Activated CD4-positive, alpha-beta T cell treated with anti-CD3 and anti-CD28 coated beads for 36 hours (primary cell): ENCODE measurements at regions of chr14 and their contacts with region 1.

Region 1: DNA sequence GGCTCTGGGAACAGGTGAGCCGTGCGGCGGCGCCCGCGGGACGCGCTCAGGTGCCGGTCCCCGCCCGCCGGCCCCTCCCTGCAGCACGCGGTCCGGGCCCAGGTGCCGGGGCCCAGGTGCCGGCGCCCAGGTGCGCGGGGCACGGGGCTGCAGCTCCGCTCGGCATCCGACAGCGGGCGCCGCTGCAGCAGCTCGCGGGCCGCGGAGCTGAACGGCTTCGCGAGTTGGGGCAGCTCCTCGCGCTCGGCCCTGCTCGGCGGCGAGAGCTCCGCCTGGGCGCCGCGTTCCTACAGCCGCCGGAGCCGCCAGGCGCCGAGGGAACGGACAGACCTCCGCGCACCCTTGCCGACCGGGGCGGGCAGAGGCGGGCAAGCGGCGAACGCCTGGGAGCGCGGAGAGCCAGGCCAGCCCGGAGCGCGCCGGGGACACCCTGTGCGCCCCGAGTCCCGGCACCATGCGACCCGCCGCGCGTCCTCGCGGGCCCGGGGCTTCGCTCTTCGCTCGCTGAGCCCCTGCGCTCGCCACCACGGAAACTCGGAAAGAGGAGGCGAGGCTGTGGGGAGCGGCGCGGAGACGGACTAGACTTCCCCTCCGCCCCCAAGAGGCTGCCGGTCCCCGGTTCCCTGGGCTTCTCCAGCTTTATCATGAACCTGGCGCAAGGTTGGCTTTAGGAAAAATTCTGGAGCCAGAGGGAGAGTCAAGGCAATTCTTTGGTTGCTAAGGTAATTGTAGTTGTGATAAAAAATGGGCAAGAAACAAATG is at the start of gene RGS6:
- DNase-seq: peak; percentile 63
- ATAC-seq: peak; percentile 82
- H3K4me3 Mint-ChIP-seq: peak within 1 kb of the TSS; percentile 44
- H3K27ac Mint-ChIP-seq: no peak within 1 kb of the TSS
- H3K4me1 Mint-ChIP-seq: peaks cover 17% of the 10 kb centered on the region
- H3K27me3 Mint-ChIP-seq: peaks cover 51% of the 10 kb centered on the region
- total RNA-seq, gene RGS6: 0.39 to 0.57 TPM

Region 2: GRCh38 chr14:71967704-71968103 is 35.3 kb after region 1 on chr14:
- CTCF ChIA-PET with region 1: interaction called, 3 read pairs
- POLR2A ChIA-PET with region 1: no interaction called
- intact Hi-C with region 1: loop called in 1 of 2 experiments (anchors 2 kb)
- DNase-seq: no peak
- ATAC-seq: peak; percentile 89
- H3K4me3 Mint-ChIP-seq: peak overlapping the region; percentile 38
- H3K27ac Mint-ChIP-seq: peak overlapping the region; percentile 78
- H3K4me1 Mint-ChIP-seq: peaks cover 14% of the 10 kb centered on the region
- H3K27me3 Mint-ChIP-seq: peaks cover 29% of the 10 kb centered on the region

Region 3: DNA sequence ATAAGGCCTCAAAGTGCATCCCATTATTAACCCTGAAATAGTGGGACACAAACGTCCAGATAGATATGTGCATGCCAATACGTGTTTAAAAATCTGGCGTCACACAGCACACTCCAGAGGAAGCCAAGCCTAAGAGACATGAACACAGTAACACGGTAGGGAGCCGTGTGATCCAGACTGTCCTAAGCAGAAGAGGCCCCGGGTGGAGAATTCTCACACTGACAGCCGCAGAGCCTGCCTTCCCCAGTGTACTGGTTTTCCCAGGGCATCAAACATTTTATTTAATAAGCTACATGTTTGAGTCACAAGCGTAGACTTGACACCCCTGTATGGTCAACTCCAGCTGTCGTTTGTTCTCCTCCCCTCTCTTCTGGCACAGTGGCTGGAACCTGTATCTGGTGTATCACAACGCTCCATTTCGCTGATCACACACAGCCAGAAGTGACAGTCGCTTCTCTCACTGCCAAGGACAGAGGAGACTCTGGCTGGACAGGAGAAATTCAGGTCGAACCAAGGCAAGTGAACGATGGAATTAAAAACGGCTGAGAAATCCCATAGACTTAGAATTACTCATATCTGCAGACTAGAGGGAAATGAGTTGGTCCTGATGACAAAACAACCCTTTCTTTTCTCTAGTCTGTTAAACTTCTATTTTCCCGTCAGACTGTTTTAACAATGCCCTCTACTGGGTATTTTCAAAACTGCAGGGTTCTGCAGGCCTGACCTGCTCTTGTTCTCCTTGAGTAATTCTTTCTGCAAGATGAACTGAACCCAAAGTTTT is 359.7 kb after region 1 on chr14:
- CTCF ChIA-PET with region 1: no interaction called
- POLR2A ChIA-PET with region 1: no interaction called
- intact Hi-C with region 1: loop called in 1 of 2 experiments (anchors 10 kb)
- DNase-seq: peak; percentile 18
- ATAC-seq: peak; percentile 51
- H3K4me3 Mint-ChIP-seq: no peak overlapping the region
- H3K27ac Mint-ChIP-seq: no peak overlapping the region
- H3K4me1 Mint-ChIP-seq: no peaks in the 10 kb centered on the region
- H3K27me3 Mint-ChIP-seq: peaks cover 19% of the 10 kb centered on the region

Region 4: GRCh38 chr14:72308967-72309485 is 376.6 kb after region 1 on chr14:
- CTCF ChIA-PET with region 1: no interaction called
- POLR2A ChIA-PET with region 1: no interaction called
- intact Hi-C with region 1: loop called in 1 of 2 experiments (anchors 10 kb)
- DNase-seq: no peak
- ATAC-seq: no peak
- H3K4me3 Mint-ChIP-seq: no peak overlapping the region
- H3K27ac Mint-ChIP-seq: no peak overlapping the region
- H3K4me1 Mint-ChIP-seq: peaks cover 8% of the 10 kb centered on the region
- H3K27me3 Mint-ChIP-seq: peaks cover 20% of the 10 kb centered on the region

Region 5: GRCh38 chr14:72387726-72388125 is 455.3 kb after region 1 on chr14:
- CTCF ChIA-PET with region 1: no interaction called
- POLR2A ChIA-PET with region 1: no interaction called
- intact Hi-C with region 1: no loop called
- DNase-seq: no peak
- ATAC-seq: no peak
- H3K4me3 Mint-ChIP-seq: no peak overlapping the region
- H3K27ac Mint-ChIP-seq: no peak overlapping the region
- H3K4me1 Mint-ChIP-seq: no peaks in the 10 kb centered on the region
- H3K27me3 Mint-ChIP-seq: peaks cover 5% of the 10 kb centered on the region

Region 6: GRCh38 chr14:72420725-72421474 is 488.5 kb after region 1 on chr14:
- CTCF ChIA-PET with region 1: interaction called, 3 read pairs
- POLR2A ChIA-PET with region 1: no interaction called
- intact Hi-C with region 1: loop called in 1 of 2 experiments (anchors 5 kb)
- DNase-seq: peak; percentile 89
- ATAC-seq: peak; percentile 49
- H3K4me3 Mint-ChIP-seq: no peak overlapping the region
- H3K27ac Mint-ChIP-seq: no peak overlapping the region
- H3K4me1 Mint-ChIP-seq: peaks cover 2% of the 10 kb centered on the region
- H3K27me3 Mint-ChIP-seq: peaks cover 3% of the 10 kb centered on the region

Region 7: DNA sequence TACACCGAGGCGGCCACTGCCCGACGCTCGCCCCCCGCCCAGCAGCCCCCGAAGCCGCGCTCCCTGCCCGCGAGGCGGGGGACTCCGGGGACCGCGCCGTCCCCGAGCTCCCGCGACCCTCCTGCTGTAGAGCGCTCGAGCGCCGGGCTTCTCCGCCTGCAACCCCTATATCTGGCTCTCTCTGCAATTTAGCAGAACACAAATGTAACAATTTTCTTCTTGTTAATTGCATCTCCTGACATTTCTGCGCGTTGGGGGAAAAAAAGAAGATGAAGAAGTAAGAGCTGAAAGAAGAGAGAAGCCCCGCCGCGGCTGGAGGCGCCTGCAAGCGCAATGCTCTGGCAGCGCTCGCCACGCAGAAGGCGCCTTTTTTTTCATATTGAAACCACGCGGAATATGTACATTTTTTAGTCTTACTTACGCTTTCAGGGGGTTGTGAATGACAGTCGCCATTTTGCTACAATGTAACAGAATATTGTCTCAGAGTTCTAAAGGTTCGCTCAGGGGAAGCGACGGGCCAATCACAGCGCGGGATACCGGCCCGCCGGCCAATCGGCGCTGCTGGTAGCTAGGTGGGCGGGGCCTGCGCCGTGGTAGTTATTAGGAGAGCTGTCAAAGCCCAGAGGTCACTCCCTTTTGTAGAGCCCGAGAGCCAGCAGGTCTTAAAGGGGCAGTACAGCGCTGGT is 961.4 kb after region 1 on chr14 and contains the start of gene DPF3:
- CTCF ChIA-PET with region 1: no interaction called
- POLR2A ChIA-PET with region 1: no interaction called
- intact Hi-C with region 1: loop called in 1 of 2 experiments (anchors 5 kb)
- DNase-seq: peak; percentile 94
- ATAC-seq: peak; percentile 99
- H3K4me3 Mint-ChIP-seq: peak within 1 kb of the TSS; percentile 78
- H3K27ac Mint-ChIP-seq: peak within 1 kb of the TSS; percentile 55
- H3K4me1 Mint-ChIP-seq: peaks cover 17% of the 10 kb centered on the region
- H3K27me3 Mint-ChIP-seq: peaks cover 43% of the 10 kb centered on the region
- total RNA-seq, gene DPF3: 0.25 to 0.39 TPM